WTC11 (cell line): ENCODE measurements at regions of chr20 and their contacts with region 1.

Region 1: GRCh38 chr20:62937366-62938104 is 412 bp upstream of the GID8 start:
- DNase-seq: peak; percentile 97
- ATAC-seq: peak; percentile 87
- H3K4me3 Mint-ChIP-seq: no peak overlapping the region
- H3K27ac Mint-ChIP-seq: peak overlapping the region; percentile 97
- H3K4me1 Mint-ChIP-seq: peaks cover 24% of the 10 kb centered on the region
- H3K27me3 Mint-ChIP-seq: no peaks in the 10 kb centered on the region
- CTCF ChIP-seq: no peak

Region 2: GRCh38 chr20:62953839-62954703 is 16.5 kb after region 1 on chr20:
- CTCF ChIA-PET with region 1: interaction called, 14 read pairs
- POLR2A ChIA-PET with region 1: interaction called, 4 read pairs
- DNase-seq: peak; percentile 53
- ATAC-seq: peak; percentile 61
- H3K4me3 Mint-ChIP-seq: peak overlapping the region; percentile 65
- H3K27ac Mint-ChIP-seq: peak overlapping the region; percentile 84
- H3K4me1 Mint-ChIP-seq: peaks cover 17% of the 10 kb centered on the region
- H3K27me3 Mint-ChIP-seq: no peaks in the 10 kb centered on the region
- CTCF ChIP-seq: no peak

Region 3: GRCh38 chr20:63017076-63017825 is 79.7 kb after region 1 on chr20:
- CTCF ChIA-PET with region 1: no interaction called
- POLR2A ChIA-PET with region 1: no interaction called
- DNase-seq: no peak
- ATAC-seq: no peak
- H3K4me3 Mint-ChIP-seq: no peak overlapping the region
- H3K27ac Mint-ChIP-seq: no peak overlapping the region
- H3K4me1 Mint-ChIP-seq: peaks cover 19% of the 10 kb centered on the region
- H3K27me3 Mint-ChIP-seq: peaks cover 24% of the 10 kb centered on the region
- CTCF ChIP-seq: no peak